ENCODE measurements at regions of chr12 and their contacts with region 1.

Region 1: GRCh38 chr12:25436203-25437030 is 116.7 kb downstream of the LMNTD1 start:
- DNase-seq: peak; percentile 45
- H3K4me3 Mint-ChIP-seq: peak overlapping the region; percentile 64
- H3K27ac Mint-ChIP-seq: peak overlapping the region; percentile 63
- H3K4me1 Mint-ChIP-seq: peaks cover 13% of the 10 kb centered on the region
- H3K27me3 Mint-ChIP-seq: no peaks in the 10 kb centered on the region
- CTCF ChIP-seq: peak; percentile 68

Region 2: GRCh38 chr12:25557830-25558436 is 121.5 kb after region 1 on chr12:
- CTCF ChIA-PET with region 1: no interaction called
- intact Hi-C with region 1: loop called (anchors 5 kb)
- DNase-seq: peak; percentile 37
- H3K4me3 Mint-ChIP-seq: no peak overlapping the region
- H3K27ac Mint-ChIP-seq: no peak overlapping the region
- H3K4me1 Mint-ChIP-seq: no peaks in the 10 kb centered on the region
- H3K27me3 Mint-ChIP-seq: no peaks in the 10 kb centered on the region
- CTCF ChIP-seq: no peak

Region 3: DNA sequence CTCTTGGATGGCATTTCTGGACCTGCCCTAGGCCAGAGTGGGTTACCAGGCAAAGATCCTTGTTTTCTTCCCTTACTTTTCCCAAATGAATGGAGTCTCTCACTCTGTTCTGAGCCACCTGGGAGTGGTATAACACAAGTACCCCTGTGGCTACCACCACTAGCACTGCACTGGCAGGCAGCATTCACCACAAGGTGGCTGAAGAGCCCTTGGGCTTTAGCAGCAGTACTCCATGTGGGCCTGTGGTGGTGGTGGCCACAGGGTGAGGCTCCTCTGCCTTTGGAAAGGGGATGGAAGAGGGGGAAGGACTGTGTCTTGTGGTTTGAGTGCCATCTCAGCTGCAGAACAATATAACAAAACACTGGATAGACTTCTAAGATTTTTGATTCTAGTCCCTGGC is 154.7 kb after region 1 on chr12:
- CTCF ChIA-PET with region 1: no interaction called
- intact Hi-C with region 1: no loop called
- DNase-seq: no peak
- H3K4me3 Mint-ChIP-seq: no peak overlapping the region
- H3K27ac Mint-ChIP-seq: no peak overlapping the region
- H3K4me1 Mint-ChIP-seq: no peaks in the 10 kb centered on the region
- H3K27me3 Mint-ChIP-seq: peaks cover 8% of the 10 kb centered on the region
- CTCF ChIP-seq: no peak

Region 4: DNA sequence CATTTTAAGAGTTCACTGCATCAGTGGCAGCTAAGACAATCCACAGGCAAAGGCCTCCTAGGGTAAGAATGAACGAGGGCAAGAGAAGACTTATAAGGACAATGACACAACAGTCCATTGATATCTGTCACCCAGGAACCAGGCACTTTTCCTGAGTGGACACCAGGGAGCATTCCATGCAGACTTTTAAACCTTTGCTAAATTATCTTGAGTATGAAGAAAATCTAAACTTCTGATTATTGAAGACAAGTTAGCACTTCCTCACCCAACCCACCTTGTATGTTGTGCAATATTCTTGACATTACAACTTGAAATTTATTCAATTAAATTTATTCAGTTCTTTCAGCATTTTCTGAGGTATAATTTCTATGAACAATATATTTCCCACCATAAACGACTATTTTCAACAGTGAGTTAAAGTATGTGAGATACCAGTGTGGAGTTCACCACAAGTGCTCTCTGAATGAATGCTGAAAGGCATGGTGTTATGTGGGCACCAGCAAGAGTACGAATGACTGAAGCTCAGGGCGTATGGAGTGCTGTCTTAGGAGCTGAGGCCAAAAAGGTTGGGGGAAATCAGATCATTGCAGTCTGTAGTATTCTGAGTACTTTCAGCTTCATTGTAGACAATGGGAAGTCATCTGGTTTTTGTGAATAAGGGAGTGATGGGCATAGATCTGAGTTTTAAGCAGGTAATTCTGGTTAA is 241.0 kb after region 1 on chr12:
- CTCF ChIA-PET with region 1: no interaction called
- intact Hi-C with region 1: loop called (anchors 10 kb)
- DNase-seq: no peak
- H3K4me3 Mint-ChIP-seq: no peak overlapping the region
- H3K27ac Mint-ChIP-seq: no peak overlapping the region
- H3K4me1 Mint-ChIP-seq: no peaks in the 10 kb centered on the region
- H3K27me3 Mint-ChIP-seq: no peaks in the 10 kb centered on the region
- CTCF ChIP-seq: no peak

Region 5: GRCh38 chr12:26028953-26029735 is 592.7 kb after region 1 on chr12:
- CTCF ChIA-PET with region 1: interaction called, 3 read pairs
- intact Hi-C with region 1: loop called (anchors 1 kb)
- DNase-seq: peak; percentile 52
- H3K4me3 Mint-ChIP-seq: no peak overlapping the region
- H3K27ac Mint-ChIP-seq: no peak overlapping the region
- H3K4me1 Mint-ChIP-seq: peaks cover 33% of the 10 kb centered on the region
- H3K27me3 Mint-ChIP-seq: no peaks in the 10 kb centered on the region
- CTCF ChIP-seq: peak; percentile 51

Region 6: DNA sequence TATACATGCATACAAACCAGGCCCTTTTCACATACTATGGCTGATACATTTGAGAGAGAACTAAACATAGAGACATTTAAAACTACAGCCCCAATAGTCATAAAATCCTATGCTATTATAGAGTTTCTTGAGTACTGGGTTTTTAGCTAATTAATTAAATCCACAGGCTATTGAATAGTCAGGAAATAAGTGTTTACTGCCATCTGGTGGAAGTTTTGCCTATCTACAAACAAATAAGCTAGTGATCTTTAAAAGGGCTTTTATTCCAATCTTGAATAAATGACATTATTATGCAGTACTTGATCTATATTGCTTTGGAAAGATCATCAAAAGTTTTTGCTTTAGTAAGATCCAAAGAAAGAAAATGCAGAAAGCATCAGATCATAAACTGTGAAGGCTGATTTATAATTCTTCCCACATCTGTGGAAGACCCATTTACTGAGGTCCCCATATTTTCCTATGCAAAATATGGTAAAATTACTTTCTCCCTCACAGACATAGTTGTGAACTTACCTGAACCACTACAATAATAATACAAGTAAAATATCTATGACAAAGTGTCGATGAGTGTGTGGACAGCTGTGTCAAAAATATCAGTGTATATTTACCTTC is 1265.3 kb after region 1 on chr12:
- CTCF ChIA-PET with region 1: no interaction called
- intact Hi-C with region 1: loop called (anchors 10 kb)
- DNase-seq: no peak
- H3K4me3 Mint-ChIP-seq: no peak overlapping the region
- H3K27ac Mint-ChIP-seq: no peak overlapping the region
- H3K4me1 Mint-ChIP-seq: peaks cover 4% of the 10 kb centered on the region
- H3K27me3 Mint-ChIP-seq: no peaks in the 10 kb centered on the region
- CTCF ChIP-seq: no peak

Measured in Calu3 (cell line).